ENCODE measurements at regions of chr14 and their contacts with region 1.

Region 1: DNA sequence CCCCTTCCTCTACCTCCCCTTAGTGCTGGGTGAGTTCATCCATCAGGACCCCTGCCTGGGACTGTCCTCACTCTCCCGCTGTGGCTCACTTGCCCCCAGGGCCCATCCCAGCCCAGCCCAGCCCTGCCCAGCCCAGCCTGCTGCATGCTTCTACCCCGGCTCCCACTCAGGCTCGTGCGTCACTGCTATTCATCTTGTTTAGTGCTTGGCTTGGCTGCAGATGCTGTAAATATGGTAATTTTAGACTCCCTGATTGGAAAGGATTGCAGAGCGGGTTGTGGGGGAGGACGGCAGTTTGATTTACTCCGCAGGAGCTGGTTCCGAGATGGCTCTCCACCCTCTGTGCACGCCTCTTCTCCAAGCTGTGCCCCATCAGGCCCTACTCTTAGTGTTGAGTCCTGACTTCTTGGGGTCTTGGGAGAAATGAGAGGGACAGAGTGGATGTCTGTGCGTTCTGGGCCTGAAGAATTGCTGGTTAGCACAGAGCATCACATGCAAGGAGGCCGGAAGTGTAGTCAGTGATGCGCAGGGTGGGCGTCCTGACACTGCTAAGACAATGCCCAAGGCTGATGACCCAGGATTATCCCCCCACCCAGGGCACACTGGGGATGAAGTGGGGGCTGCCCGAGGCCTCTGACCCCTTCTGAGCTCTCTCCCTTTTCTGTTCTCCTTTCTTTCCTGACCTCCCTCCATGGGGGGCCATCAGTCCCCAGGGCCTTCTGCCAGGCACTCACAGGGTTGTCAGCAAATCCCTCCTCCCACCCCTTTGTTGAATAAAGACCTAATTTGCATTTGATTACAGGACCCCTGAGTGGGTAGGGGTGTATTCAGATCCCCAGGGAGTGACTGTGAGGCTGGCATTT is 244.4 kb downstream of the ZFP36L1 start:
- DNase-seq: peak; percentile 92

Region 2: DNA sequence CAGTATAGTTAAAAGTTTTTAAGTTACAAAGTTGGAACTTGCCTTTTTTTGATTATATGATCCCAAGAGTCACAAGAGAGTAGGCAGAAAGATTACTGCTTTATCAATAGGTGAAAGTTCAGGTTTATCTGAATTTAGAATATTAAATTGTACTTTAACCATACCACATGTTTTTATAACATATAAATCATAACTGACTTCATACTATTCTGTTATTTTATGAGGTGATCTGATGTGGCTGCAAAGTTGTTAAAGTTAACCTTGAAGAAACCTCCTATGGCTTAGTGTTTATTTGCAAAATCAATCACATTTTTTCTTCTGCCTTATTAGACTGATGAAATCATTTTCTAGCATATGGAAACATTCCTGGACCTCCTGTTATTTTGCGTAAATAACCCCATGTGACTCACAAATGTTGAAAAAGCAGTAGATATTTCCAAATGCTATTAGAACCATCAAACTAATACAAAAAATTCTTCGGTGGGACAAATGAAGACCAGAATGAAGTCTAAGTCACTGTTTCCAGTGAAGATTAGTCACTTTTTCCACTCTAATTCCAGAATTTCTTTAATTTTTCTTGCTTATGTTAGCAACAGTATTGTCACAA is 596.8 kb before region 1 on chr14:
- intact Hi-C with region 1: no loop called
- DNase-seq: no peak

Region 3: DNA sequence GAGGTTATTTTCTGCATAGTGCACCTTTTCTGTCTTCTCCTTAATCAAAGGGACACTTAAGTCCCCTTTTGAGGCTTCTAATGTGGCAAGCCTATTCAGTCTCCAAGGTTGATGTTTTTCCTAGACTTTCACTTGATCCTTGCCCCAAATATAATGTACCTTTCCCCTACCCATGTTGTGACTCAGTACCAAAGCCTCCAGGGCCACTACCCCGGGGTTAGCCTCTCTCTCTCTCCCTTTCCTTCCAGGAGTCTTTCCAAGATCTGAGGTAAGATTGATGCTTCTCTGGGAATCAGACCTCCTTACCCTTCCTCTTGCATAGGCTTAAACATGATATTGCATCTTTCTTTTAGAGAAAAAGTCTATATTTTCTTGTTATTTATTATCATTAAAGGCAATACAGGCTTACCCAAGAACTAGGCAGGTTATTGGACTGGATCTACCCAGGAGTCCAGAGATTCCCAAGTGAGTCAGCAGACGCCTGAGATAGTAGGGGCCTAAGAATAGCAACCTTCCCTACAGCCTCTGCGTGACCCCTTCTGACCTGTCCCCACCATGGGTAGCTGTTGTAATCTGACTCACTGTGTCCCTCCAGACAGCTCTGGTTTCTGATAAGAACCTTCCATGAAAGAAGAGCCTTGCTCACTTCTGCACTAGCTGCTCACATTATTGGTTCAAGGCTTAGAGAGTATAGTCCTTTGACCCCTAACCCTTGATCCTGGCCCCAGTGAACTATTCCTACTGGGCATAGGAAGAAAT is 71.6 kb after region 1 on chr14:
- intact Hi-C with region 1: loop called (anchors 1 kb)
- DNase-seq: no peak

Region 4: GRCh38 chr14:68663385-68664076 is 115.1 kb after region 1 on chr14:
- intact Hi-C with region 1: loop called (anchors 5 kb)
- DNase-seq: no peak

Region 5: DNA sequence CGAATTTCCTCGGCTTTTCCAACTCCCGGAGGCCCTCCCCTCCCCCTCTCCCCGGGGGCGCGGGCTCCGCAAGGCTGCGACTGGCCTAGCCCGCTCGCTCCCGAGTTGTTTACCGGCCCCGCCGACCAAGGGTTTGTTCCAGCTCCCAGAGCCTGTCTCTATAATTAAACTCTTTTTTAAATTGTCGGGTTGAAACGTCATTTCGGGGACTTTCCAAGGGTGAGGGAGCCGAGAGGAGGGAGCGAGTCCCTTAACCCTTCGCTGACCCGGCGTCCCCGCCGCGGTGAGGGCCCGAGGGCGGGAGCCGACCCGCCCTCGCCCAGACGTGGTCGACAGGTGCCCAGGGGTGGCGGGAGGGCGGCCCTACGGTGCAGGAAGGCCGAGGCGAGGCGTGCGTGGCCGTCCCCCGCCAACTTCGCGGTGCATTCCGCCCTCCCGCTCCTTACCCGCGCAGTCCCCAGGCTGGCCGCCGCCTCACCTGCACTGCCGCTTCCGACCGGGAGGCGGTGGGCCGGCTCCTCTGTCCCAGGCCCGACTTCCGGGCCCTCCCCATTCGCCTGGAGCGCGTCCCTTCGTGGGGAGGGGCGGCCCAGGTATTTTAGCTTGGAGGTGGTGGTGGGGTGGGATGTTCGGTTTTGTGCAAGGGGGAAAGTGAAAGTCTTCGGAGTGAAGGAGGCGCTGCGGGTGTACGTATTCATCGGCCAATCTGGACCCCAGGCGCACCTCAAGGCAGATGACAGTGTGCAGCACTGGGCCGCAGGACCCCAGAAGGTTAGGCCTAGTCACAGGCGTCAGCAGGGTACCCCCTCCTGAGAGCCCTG is 247.4 kb after region 1 on chr14:
- intact Hi-C with region 1: loop called (anchors 5 kb)
- DNase-seq: peak; percentile 93

Measured in cardiac septum (tissue), 1 donor.